Sigmoid colon (tissue), 7 donors: ENCODE measurements at regions of chr19 and their contacts with region 1.

Region 1: GRCh38 chr19:2151339-2152229 is at the start of gene AP3D1:
- DNase-seq: peak; percentile 100
- H3K4me3 ChIP-seq: peak within 1 kb of the TSS; percentile 91 to 97 (median 95)
- H3K27ac ChIP-seq: peak within 1 kb of the TSS; percentile 86 to 90 (median 88)
- H3K4me1 ChIP-seq: peaks cover 0 to 41% (median 30%) of the 10 kb centered on the region in 4 donors
- H3K27me3 ChIP-seq: no peaks in the 10 kb centered on the region
- CTCF ChIP-seq: no peak
- EP300 ChIP-seq: no peak
- POLR2A ChIP-seq: no peak
- total RNA-seq, gene AP3D1: 43.1 to 83.1 (median 51.2) TPM

Region 2: DNA sequence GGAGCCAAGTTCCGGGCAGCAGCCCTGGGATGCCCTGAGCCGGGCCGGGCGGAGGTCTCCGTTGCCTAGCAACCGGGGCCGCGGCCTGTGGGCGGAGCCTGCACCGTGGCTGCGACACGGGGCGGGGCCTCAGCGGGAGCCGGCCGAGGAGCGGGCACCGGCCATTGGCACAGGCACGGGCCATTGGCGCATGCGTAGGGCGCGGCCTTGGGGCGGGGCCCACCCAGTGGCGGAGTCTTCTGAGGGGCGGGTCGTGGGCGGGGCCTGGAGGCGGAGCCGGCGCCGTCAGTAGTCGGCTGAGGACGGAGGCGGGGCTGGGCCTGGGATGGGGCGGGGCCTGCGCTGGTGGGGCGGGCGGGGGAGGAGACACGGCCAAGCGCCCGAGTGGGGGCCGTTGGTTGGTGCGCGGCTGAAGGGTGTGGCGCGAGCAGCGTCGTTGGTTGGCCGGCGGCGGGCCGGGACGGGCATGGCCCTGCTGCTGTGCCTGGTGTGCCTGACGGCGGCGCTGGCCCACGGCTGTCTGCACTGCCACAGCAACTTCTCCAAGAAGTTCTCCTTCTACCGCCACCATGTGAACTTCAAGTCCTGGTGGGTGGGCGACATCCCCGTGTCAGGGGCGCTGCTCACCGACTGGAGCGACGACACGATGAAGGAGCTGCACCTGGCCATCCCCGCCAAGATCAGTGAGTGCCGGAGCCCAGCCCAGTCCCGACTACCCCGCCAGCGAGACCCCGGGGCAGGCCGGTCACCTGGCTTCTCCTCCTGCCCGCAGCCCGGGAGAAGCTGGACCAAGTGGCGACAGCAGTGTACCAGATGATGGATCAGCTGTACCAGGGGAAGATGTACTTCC is 54.9 kb before region 1 on chr19 and contains the start of gene IZUMO4:
- intact Hi-C with region 1: loop called (anchors 5 kb)
- DNase-seq: peak; percentile 99
- H3K4me3 ChIP-seq: peak within 1 kb of the TSS; percentile 63 to 87 (median 74)
- H3K27ac ChIP-seq: peak within 1 kb of the TSS; percentile 88 to 99 (median 93)
- H3K4me1 ChIP-seq: peaks cover 0 to 52% (median 44%) of the 10 kb centered on the region in 4 donors
- H3K27me3 ChIP-seq: no peaks in the 10 kb centered on the region
- CTCF ChIP-seq: peak in 3 of 4 experiments; percentile 30 to 38 (median 34)
- EP300 ChIP-seq: no peak
- POLR2A ChIP-seq: no peak
- total RNA-seq, gene IZUMO4: 2.3 to 6.0 (median 4.6) TPM

Region 3: GRCh38 chr19:2186071-2186846 is 34.7 kb after region 1 on chr19:
- intact Hi-C with region 1: loop called (anchors 5 kb)
- DNase-seq: peak; percentile 96
- H3K4me3 ChIP-seq: peak overlapping the region in 3 of 4 donors; percentile 0 to 21 (median 12)
- H3K27ac ChIP-seq: peak overlapping the region; percentile 80 to 92 (median 84)
- H3K4me1 ChIP-seq: peaks cover 3 to 77% (median 67%) of the 10 kb centered on the region in 4 donors
- H3K27me3 ChIP-seq: no peaks in the 10 kb centered on the region
- CTCF ChIP-seq: no peak
- EP300 ChIP-seq: peak in 2 of 4 donors; percentile 37 to 76
- POLR2A ChIP-seq: no peak

Region 4: DNA sequence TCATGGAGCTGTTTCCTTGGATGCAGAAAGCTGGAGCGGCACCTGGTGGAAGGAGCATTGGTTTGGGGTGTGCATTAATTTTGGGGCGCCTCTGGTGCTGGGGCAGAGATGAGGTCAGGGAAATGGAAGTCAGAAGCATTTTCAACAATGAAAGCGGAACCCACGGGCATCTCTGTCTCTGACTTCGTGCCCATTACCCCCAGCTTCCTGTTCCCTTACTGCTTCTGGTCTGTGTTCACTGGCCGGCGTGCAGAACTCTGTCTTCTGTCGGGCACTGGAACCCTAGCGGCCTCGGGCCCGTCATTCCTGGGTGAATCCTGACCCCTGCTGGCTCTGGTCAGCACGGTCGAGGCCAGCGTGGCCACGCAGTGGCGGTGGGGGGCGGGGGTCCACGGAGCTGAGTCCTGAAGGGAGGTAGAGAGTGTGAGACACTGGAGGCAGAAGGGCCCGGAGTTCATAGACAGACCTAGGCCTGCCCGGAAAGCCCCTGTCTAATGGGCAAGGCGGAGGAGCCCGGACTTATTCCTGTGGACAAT is 164.3 kb after region 1 on chr19:
- intact Hi-C with region 1: loop called (anchors 5 kb)
- DNase-seq: peak; percentile 85
- H3K4me3 ChIP-seq: no peak overlapping the region
- H3K27ac ChIP-seq: no peak overlapping the region
- H3K4me1 ChIP-seq: peaks cover 0 to 8% (median 0%) of the 10 kb centered on the region in 4 donors
- H3K27me3 ChIP-seq: peaks cover 13 to 29% (median 25%) of the 10 kb centered on the region in 3 donors
- CTCF ChIP-seq: peak; percentile 47 to 74 (median 58)
- EP300 ChIP-seq: no peak
- POLR2A ChIP-seq: no peak

Region 5: DNA sequence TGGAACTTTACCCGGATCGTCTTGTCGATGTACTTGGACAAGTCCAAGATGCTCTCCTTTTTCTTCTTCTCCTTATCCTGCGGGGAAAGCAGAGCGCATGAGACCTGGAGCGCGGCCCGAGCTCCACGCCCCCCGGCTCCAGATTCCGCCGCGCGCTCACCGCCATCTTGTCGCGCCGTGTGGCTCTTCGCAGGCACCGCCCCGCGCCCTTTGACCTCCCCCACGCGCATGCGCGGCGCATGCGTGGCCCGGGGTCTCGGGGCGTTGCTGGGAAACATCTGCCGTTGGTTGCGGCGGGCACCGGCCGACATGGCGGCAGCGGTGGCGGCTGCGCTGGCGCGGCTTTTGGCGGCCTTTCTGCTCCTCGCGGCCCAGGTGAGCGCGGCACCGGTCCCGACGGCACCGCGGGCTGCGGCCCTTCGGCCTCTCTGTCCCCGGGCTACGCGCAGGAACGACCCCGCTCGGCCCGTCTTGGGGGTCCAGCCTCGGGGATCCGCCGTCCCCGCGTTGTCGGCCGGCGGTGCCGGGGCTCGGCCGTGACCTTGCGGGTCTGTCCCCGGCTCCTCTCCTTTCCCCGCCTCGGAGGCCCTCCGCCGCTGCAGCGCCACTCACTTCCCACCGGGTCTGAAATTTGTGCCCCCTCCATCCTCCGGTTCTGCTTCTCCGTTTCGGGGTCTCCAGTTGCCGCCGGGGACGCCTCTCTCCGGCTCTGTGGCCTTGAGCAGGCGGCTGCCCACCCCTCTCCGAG is 177.0 kb after region 1 on chr19 and contains the starts of genes LSM7 and SPPL2B:
- intact Hi-C with region 1: loop called (anchors 5 kb)
- DNase-seq: peak; percentile 95
- H3K4me3 ChIP-seq: peak within 1 kb of the TSS; percentile 80 to 98 (median 90)
- H3K27ac ChIP-seq: peak within 1 kb of the TSS; percentile 73 to 88 (median 82)
- H3K4me1 ChIP-seq: peaks cover 0 to 65% (median 57%) of the 10 kb centered on the region in 4 donors
- H3K27me3 ChIP-seq: no peaks in the 10 kb centered on the region
- CTCF ChIP-seq: no peak
- EP300 ChIP-seq: no peak
- POLR2A ChIP-seq: peak; percentile 34 to 59
- total RNA-seq, gene LSM7: 51.5 to 139 (median 100) TPM
- total RNA-seq, gene SPPL2B: 14.6 to 47.4 (median 24.0) TPM